ENCODE measurements at regions of chr4 and their contacts with region 1.

Region 1: GRCh38 chr4:102554482-102554881 is 53.3 kb downstream of the NFKB1 start:
- DNase-seq: peak; percentile 78 to 87
- ATAC-seq: peak; percentile 99 to 100 (median 100)
- H3K4me3 ChIP-seq: peak overlapping the region; percentile 10
- H3K27ac ChIP-seq: peak overlapping the region; percentile 72
- H3K4me1 ChIP-seq: peaks cover 38% of the 10 kb centered on the region
- H3K27me3 ChIP-seq: no peaks in the 10 kb centered on the region
- CTCF ChIP-seq: no peak

Region 2: GRCh38 chr4:102500696-102501446 is 53.6 kb before region 1 on chr4 and contains the start of gene NFKB1:
- intact Hi-C with region 1: loop called in 1 of 2 experiments (anchors 1 kb)
- DNase-seq: peak; percentile 63 to 84
- ATAC-seq: peak; percentile 70 to 74 (median 72)
- H3K4me3 ChIP-seq: peak within 1 kb of the TSS; percentile 84
- H3K27ac ChIP-seq: peak within 1 kb of the TSS; percentile 98
- H3K4me1 ChIP-seq: peaks cover 38% of the 10 kb centered on the region
- H3K27me3 ChIP-seq: no peaks in the 10 kb centered on the region
- CTCF ChIP-seq: no peak
- total RNA-seq, gene NFKB1: 19.8 to 47.5 (median 22.5) TPM

Region 3: DNA sequence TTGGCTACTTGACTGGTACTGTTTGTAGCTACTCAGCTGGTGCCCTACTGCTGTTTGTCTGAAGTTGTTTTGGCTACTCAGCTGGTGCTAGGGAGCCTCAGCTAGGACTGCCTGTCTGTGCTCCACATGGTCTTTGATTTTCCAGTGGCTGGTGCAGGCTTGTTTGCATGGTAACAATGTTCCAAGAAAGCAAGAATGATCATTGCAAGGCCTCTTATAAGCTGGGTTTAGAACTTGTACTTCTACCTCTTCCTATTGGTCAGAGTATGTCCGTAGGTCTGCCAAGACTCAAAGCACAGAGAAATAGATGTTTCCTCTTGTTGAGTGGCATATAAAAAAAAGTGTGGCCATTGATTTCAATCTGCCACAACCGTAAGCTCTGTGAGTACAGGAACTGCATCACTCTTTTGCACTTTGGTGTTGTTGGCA is 35.8 kb before region 1 on chr4:
- intact Hi-C with region 1: loop called in 1 of 2 experiments (anchors 5 kb)
- DNase-seq: no peak
- ATAC-seq: peak in 3 of 4 donors; percentile 30 to 43 (median 40)
- H3K4me3 ChIP-seq: no peak overlapping the region
- H3K27ac ChIP-seq: no peak overlapping the region
- H3K4me1 ChIP-seq: peaks cover 38% of the 10 kb centered on the region
- H3K27me3 ChIP-seq: no peaks in the 10 kb centered on the region
- CTCF ChIP-seq: no peak